A673 (cell line): ENCODE measurements at regions of chr13 and their contacts with region 1.

Region 1: GRCh38 chr13:114065141-114065925 is 67.1 kb downstream of the RASA3 start:
- DNase-seq: peak; percentile 89
- H3K4me3 ChIP-seq: peak overlapping the region; percentile 36
- H3K27ac ChIP-seq: peak overlapping the region; percentile 82
- H3K4me1 ChIP-seq: peaks cover 27% of the 10 kb centered on the region
- H3K27me3 ChIP-seq: no peaks in the 10 kb centered on the region
- CTCF ChIP-seq: no peak

Region 2: GRCh38 chr13:113881614-113882266 is 183.6 kb before region 1 on chr13:
- CTCF ChIA-PET with region 1: no interaction called
- POLR2A ChIA-PET with region 1: no interaction called
- intact Hi-C with region 1: no loop called
- DNase-seq: no peak
- H3K4me3 ChIP-seq: no peak overlapping the region
- H3K27ac ChIP-seq: no peak overlapping the region
- H3K4me1 ChIP-seq: peaks cover 6% of the 10 kb centered on the region
- H3K27me3 ChIP-seq: peaks cover 16% of the 10 kb centered on the region
- CTCF ChIP-seq: no peak

Region 3: DNA sequence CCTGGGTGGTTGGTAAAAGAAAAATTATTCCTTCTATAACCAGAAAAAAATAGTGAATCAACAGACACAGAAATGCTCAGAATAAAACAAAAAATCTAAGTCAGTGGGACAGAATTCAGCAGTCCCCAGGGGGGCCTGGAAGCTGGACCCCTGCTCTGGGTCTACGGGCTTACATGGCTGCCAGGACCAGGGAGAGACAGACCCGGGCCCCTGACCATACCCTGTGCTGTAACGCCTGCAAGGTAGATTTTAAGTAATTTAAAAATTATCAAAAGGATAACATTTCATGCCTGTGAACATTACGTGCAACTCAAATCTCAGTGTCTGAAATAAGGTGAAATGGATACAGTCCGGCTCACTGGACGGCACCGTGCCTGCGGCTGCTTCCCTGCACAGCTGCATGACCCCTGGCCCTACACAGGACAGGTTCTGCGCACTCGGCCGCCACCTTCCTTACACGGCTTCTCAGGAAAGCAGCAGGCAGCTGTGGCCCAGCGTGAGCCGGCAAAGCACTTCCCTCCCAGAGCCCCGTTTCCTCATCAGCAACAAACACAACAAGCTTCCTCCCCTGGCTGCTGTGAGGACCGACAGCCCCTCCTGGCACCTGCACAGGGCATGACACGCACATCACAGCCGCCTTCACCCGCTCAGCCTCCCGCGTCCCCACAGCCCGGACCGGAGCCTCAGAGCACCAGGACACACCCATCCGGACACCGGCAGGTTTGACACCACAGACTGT is 44.9 kb after region 1 on chr13:
- CTCF ChIA-PET with region 1: no interaction called
- POLR2A ChIA-PET with region 1: no interaction called
- intact Hi-C with region 1: loop called (anchors 10 kb)
- DNase-seq: no peak
- H3K4me3 ChIP-seq: no peak overlapping the region
- H3K27ac ChIP-seq: no peak overlapping the region
- H3K4me1 ChIP-seq: peaks cover 25% of the 10 kb centered on the region
- H3K27me3 ChIP-seq: no peaks in the 10 kb centered on the region
- CTCF ChIP-seq: no peak